ENCODE measurements at regions of chr15 and their contacts with region 1.

Region 1: GRCh38 chr15:32936283-32936918 is 218.6 kb downstream of the GREM1 start:
- DNase-seq: no peak
- ATAC-seq: peak; percentile 50 to 78 (median 76)
- H3K4me3 ChIP-seq: no peak overlapping the region
- H3K27ac ChIP-seq: no peak overlapping the region
- H3K4me1 ChIP-seq: no peaks in the 10 kb centered on the region
- H3K27me3 ChIP-seq: no peaks in the 10 kb centered on the region
- CTCF ChIP-seq: peak; percentile 22 to 59 (median 40)

Region 2: DNA sequence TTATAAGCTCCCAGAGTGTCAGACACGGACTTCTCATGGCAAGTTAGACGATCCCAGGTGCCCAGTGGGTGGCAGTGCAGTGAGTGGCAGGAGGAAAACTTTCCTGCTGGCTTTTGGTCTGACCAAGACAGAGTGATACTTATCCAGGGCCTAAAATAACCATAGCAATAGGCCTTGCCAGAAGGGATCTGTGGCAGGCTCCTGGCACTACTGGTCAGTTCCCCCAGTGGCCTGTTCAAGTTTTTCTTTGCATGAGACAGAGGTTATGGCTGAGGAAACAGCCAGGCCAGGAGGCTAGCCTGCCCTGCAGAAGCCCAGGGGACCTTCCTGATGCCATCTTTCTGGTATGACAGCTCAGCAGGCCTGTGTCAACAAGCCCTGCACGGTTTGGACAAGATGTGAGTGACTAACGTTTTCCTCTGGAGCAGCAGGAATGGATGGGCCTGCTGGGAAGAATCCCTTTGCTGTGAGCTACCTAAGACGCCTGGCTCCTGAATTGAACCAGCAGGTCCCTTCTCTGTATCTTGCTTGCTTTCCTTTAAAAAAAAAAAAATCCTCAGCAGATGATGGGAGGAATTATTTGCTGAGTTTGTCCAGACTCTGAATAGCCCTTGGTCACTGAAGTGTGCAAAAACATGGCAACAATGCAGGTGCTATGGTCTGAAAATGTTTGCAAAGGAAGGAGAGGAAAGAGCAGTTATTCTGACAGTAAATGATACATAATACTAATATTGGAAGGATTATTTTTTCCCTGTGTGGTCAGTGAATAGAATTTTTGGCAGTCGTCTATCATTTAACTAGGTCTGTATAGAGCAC is 276.9 kb before region 1 on chr15:
- intact Hi-C with region 1: loop called in 1 of 3 experiments (anchors 10 kb)
- DNase-seq: no peak
- ATAC-seq: peak in 3 of 4 donors; percentile 24 to 50 (median 38)
- H3K4me3 ChIP-seq: no peak overlapping the region
- H3K27ac ChIP-seq: peak overlapping the region in 2 of 4 donors; percentile 40 to 42
- H3K4me1 ChIP-seq: peaks cover 8 to 45% (median 21%) of the 10 kb centered on the region in 3 donors
- H3K27me3 ChIP-seq: no peaks in the 10 kb centered on the region
- CTCF ChIP-seq: no peak

Region 3: DNA sequence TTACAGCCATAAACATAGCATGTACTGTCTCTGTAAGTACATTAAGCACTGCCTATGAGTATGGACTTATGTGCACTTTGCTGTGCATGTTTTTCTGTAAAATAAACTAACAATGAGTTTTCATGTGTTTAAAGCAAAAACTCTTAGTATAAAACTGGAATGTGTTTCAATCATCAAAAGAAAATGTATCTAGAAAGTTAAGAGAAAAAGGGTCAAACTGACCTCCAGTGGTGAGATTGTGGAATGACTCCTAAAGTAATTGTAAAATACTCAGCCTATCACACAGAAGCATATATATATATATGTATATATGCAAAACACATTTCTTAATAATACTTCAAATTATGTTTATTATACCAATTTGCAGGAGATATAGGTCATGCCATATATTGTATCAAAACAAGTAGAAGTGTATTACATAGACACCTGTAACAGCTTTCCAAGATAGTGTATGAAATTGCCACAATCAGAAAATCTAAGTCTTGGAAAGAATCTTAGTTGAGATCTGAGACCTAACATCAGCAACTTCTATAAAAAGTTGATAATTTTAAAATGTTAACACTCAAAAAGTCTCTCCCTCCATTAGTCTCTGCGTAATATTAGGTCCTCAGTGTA is 58.5 kb after region 1 on chr15:
- intact Hi-C with region 1: no loop called
- DNase-seq: no peak
- ATAC-seq: peak in 3 of 4 donors; percentile 53 to 61 (median 59)
- H3K4me3 ChIP-seq: no peak overlapping the region
- H3K27ac ChIP-seq: no peak overlapping the region
- H3K4me1 ChIP-seq: peaks cover 8 to 19% (median 10%) of the 10 kb centered on the region in 3 donors
- H3K27me3 ChIP-seq: no peaks in the 10 kb centered on the region
- CTCF ChIP-seq: peak; percentile 10 to 46 (median 32)